GM12878 (cell line): ENCODE measurements at regions of chr14 and their contacts with region 1.

Region 1: GRCh38 chr14:60648934-60649874 is at the start of gene SIX1:
- DNase-seq: no peak
- ATAC-seq: peak; percentile 72
- H3K4me3 ChIP-seq: peak within 1 kb of the TSS; percentile 36; the same call in 1 of the 2 replicates
- H3K27ac ChIP-seq: no peak within 1 kb of the TSS
- H3K4me1 ChIP-seq: no peaks in the 10 kb centered on the region; the same call in 1 of the 2 replicates
- H3K27me3 ChIP-seq: peaks cover 28 to 55% of the 10 kb centered on the region in 2 experiments
- CTCF ChIP-seq: no peak
- EP300 ChIP-seq: no peak
- POLR2A ChIP-seq: no peak
- RAD21 ChIP-seq: no peak
- polyA plus RNA-seq, gene SIX1: 0.05 TPM

Region 2: GRCh38 chr14:60573943-60574495 is 75.2 kb before region 1 on chr14:
- CTCF ChIA-PET with region 1: no interaction called
- POLR2A ChIA-PET with region 1: no interaction called
- RAD21 ChIA-PET with region 1: no interaction called
- SMC1A ChIA-PET with region 1: no interaction called
- in situ Hi-C with region 1: no loop called
- intact Hi-C with region 1: no loop called
- DNase-seq: no peak
- ATAC-seq: no peak
- H3K4me3 ChIP-seq: no peak overlapping the region
- H3K27ac ChIP-seq: no peak overlapping the region
- H3K4me1 ChIP-seq: no peaks in the 10 kb centered on the region
- H3K27me3 ChIP-seq: no peaks in the 10 kb centered on the region; a peak in 2 of 4 replicates
- CTCF ChIP-seq: no peak
- EP300 ChIP-seq: no peak
- POLR2A ChIP-seq: no peak
- RAD21 ChIP-seq: no peak

Region 3: DNA sequence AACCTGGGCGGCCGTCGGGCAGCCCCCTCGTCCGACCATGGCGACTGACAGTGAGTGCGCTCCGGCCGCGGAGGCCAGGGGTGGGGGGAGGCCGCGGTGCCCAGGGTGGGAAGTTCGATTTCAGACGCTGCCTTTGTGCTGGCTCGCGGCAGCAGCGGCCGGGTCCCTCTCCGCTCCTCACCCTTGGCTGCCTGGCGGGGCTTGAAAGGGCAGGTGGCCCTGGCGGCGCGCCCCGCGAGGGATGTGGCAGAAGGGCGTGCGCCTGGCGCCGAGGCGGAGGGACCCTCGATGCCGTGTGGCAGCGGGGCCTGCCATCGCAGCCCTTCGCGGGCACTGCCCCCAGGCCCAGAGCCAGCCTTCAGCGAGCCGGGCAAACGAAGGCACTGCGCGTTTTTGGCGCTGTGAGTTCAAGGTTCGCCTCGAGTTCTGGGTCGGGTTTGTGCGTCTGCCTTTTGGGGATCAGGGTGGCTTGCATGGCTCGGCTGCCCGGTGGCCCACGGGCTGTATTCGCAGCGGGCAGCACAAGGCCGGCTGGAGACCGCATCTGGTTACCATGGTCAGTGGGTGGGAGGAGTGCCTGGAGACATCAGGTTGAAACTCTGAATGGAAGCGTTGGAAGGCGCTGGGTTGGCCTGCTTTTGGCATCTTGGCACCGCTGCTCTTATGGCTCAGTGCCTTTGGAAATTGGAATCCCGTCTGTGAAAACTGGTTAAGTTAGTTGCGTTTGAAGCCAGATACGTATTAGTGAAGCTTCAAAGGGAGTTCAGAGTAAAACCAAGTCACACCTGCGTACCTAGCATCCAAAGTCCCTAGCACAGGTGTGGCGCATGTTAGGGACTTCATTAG is 1163.8 kb after region 1 on chr14:
- CTCF ChIA-PET with region 1: no interaction called
- POLR2A ChIA-PET with region 1: no interaction called
- RAD21 ChIA-PET with region 1: no interaction called
- SMC1A ChIA-PET with region 1: no interaction called
- in situ Hi-C with region 1: loop called (anchors 25 kb)
- intact Hi-C with region 1: no loop called
- DNase-seq: no peak
- ATAC-seq: no peak
- H3K4me3 ChIP-seq: no peak overlapping the region
- H3K27ac ChIP-seq: no peak overlapping the region
- H3K4me1 ChIP-seq: no peaks in the 10 kb centered on the region
- H3K27me3 ChIP-seq: peaks cover 6 to 22% of the 10 kb centered on the region in 2 experiments; a peak in 3 of 4 replicates
- CTCF ChIP-seq: no peak
- EP300 ChIP-seq: no peak
- POLR2A ChIP-seq: no peak
- RAD21 ChIP-seq: no peak